Prostate gland (tissue), 2 donors: ENCODE measurements at regions of chr22 and their contacts with region 1.

Region 1: DNA sequence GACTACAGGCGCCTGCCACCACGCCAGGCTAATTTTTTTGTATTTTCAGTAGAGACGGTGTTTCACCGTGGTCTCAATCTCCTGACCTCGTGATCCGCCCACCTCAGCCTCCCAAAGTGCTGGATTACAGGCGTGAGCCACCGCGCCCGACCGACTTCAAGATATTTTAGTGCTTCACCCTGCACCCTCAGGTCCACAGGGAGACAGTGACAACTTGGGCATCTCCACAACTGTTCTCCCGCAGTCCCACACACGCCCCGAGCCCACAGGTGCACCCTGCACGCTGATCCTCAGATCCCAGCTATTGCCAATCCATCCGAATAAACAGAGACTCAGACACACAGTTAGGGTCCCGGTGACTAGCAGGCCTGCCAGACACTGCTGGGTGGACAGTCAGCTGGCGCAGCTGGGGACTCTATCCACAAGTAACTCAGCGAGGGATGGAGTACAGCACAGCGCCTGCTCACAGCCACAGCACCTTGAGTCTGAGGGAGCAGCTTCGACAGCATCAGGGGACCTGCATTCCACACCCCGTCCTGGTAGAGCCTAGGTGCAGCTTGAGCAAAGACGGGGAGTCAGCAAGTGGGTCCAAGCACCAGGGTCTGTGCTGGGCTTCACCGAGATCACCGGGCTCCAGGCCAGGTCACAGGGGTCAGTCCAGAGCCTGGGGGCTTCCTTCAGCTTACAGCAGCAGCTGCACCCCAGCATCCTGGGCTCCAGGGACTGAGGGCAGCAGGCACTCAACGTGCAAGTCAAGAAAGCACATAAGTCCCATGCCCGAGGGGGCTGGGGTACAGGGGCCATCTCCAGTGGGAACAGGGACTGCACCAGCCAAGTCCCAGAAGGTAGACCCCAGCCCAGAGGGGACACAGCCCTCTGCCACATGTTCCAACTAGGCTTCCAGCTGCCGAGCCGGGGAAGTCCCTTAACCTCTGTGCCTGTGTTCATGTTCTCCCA is 7.7 kb downstream of the RPL3 start:
- DNase-seq: no peak
- H3K4me3 ChIP-seq: no peak overlapping the region
- H3K27ac ChIP-seq: no peak overlapping the region
- H3K4me1 ChIP-seq: peaks cover 14% of the 10 kb centered on the region
- H3K27me3 ChIP-seq: no peaks in the 10 kb centered on the region
- CTCF ChIP-seq: no peak
- POLR2A ChIP-seq: no peak

Region 2: GRCh38 chr22:39170825-39171622 is 140.7 kb before region 1 on chr22:
- intact Hi-C with region 1: loop called (anchors 1 kb)
- DNase-seq: peak; percentile 80
- H3K4me3 ChIP-seq: no peak overlapping the region
- H3K27ac ChIP-seq: no peak overlapping the region
- H3K4me1 ChIP-seq: peaks cover 23% of the 10 kb centered on the region
- H3K27me3 ChIP-seq: no peaks in the 10 kb centered on the region
- CTCF ChIP-seq: peak; percentile 92 to 99 (median 98)
- POLR2A ChIP-seq: no peak

Region 3: GRCh38 chr22:39546889-39547586 is 235.3 kb after region 1 on chr22:
- intact Hi-C with region 1: no loop called
- DNase-seq: no peak
- H3K4me3 ChIP-seq: no peak overlapping the region
- H3K27ac ChIP-seq: no peak overlapping the region
- H3K4me1 ChIP-seq: no peaks in the 10 kb centered on the region
- H3K27me3 ChIP-seq: no peaks in the 10 kb centered on the region
- CTCF ChIP-seq: no peak
- POLR2A ChIP-seq: no peak